ENCODE measurements at regions of chr5 and their contacts with region 1.

Region 1: GRCh38 chr5:69093771-69094482 is at the start of gene SLC30A5:
- DNase-seq: peak; percentile 100
- total RNA-seq, gene SLC30A5: 40.7 TPM

Region 2: GRCh38 chr5:69042915-69043658 is 50.8 kb before region 1 on chr5:
- intact Hi-C with region 1: loop called (anchors 2 kb)
- DNase-seq: no peak

Region 3: DNA sequence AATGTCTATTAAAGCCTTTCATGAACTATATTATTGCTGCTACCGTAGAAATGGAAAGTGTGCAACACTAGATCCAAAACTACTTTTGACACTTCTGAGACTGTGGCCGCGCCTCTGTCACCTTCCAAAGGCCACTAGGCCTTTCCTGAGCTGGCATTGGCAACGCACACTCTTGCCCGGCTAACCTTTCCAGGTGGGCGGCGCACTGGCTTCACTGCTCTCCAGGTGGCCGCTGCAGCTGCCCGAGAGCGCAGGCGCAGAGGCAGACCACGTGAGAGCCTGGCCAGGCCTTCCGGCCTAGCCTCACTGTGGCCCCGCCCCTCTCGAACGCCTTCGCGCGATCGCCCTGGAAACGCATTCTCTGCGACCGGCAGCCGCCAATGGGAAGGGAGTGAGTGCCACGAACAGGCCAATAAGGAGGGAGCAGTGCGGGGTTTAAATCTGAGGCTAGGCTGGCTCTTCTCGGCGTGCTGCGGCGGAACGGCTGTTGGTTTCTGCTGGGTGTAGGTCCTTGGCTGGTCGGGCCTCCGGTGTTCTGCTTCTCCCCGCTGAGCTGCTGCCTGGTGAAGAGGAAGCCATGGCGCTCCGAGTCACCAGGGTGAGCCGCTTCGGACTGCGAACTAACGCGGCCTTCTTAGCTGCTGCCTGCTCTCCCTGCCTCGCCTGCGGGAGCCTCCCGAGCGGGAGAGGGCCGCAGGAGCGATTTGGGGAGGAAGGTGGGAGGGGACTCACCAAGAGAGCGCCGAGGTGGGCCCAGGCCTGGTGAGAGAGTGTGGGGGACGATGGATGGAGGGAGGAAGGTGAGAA is 73.0 kb after region 1 on chr5 and contains the start of gene CCNB1:
- intact Hi-C with region 1: loop called (anchors 5 kb)
- DNase-seq: peak; percentile 99
- total RNA-seq, gene CCNB1: 2.1 TPM

Region 4: DNA sequence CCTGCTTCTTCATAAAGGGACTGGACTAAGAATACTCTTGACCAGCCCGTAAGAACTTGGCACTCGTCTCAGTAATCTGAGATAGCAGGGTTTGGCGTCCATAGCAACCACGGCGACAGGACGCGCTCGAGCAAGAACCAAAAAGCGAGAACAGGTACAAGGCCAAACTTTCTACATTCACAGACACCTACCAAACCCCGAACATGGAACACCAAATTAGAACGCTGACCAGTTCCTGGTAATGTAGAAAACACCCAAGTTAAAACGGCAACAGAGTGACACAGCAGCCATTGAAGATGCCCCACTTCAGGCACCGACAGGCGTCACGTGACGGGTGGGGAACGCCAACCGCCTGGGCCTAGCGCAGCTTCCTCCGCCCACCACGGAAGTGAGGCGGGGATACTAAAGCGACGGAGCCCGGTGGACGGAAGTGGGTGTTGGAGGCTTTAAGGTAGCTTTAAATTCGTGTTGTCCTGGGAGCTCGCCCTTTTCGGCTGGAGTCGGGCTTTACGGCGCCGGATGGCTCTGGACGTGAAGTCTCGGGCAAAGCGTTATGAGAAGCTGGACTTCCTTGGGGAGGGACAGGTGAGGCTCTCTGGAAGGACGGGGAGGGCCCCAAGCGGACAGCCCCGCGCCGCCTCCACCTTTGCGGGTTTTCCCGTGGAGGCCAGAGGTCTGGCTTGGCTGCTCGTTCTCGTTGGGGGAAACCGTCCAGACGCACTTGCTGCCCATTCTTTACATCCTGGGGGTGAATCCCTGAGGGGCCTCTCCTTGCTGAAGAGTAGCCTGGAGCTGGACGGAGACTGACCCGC is 140.7 kb after region 1 on chr5 and contains the start of gene CDK7:
- intact Hi-C with region 1: loop called (anchors 2 kb)
- DNase-seq: peak; percentile 98
- total RNA-seq, gene CDK7: 13.3 TPM

Region 5: DNA sequence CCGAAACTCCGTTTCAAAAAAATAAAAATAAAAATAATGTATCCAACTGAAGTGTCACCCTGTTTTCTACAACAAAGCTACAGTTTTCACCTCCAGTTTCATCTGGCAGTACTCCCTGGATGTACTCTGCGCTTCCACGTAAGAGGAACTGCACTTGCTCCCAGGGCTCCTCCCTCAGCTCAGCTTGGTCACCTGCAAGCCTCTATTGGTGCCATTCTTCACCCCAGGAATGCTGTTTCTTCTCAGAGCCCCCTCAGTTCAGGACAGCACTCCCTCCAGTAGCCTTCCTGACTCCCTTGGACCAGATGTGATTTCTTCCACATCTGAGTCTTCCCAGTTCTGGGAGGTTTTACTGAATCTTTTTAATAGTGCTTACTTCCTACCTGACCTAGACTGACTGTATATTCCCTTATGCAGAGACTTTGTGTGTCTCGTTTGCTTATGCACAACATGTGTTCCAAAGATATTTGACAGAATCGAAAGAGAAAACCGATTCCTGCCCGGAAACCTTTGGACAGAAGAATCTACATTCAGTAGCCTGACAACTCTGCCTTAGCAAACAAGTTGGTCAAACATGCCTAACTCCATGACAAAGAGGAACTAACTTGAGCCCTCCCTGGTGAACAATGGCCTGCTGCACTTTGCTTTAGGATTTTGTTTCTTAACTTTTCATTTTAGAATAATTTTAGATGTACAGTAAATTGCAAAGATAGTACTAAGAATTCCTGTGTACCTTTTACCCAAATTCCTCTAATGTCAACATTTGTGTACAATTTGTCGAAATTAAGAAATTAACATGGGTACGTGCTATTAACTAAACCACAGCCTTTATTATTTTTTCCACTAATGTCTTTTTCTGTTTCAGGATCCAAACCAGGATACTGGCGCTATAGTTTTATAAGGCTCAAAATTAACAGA is 237.9 kb after region 1 on chr5:
- intact Hi-C with region 1: loop called (anchors 2 kb)
- DNase-seq: no peak

Region 6: GRCh38 chr5:69369369-69370121 is 275.6 kb after region 1 on chr5 and contains the starts of genes AK6, RAD17 and TAF9:
- intact Hi-C with region 1: loop called (anchors 10 kb)
- DNase-seq: peak; percentile 97
- total RNA-seq, gene AK6: 35.1 TPM
- total RNA-seq, gene RAD17: 22.0 TPM
- total RNA-seq, gene TAF9: 44.2 TPM